ENCODE measurements at regions of chr14 and their contacts with region 1.

Region 1: GRCh38 chr14:100078991-100079725 is 13.9 kb downstream of the EVL start:
- DNase-seq: peak; percentile 68 to 93
- ATAC-seq: peak; percentile 49 to 77 (median 74)
- H3K4me3 ChIP-seq: peak overlapping the region; percentile 23
- H3K4me3 Mint-ChIP-seq: peak overlapping the region; percentile 83
- H3K27ac ChIP-seq: peak overlapping the region; percentile 64
- H3K27ac Mint-ChIP-seq: peak overlapping the region; percentile 93
- H3K4me1 ChIP-seq: peaks cover 94% of the 10 kb centered on the region
- H3K4me1 Mint-ChIP-seq: peaks cover 98% of the 10 kb centered on the region in 2 donors
- H3K27me3 ChIP-seq: no peaks in the 10 kb centered on the region
- H3K27me3 Mint-ChIP-seq: no peaks in the 10 kb centered on the region
- CTCF ChIP-seq: no peak

Region 2: GRCh38 chr14:100067971-100068959 is 10.9 kb before region 1 on chr14:
- intact Hi-C with region 1: loop called (anchors 1 kb)
- DNase-seq: peak; percentile 85 to 96
- ATAC-seq: peak; percentile 53 to 76 (median 65)
- H3K4me3 ChIP-seq: peak overlapping the region; percentile 78
- H3K4me3 Mint-ChIP-seq: peak overlapping the region; percentile 90
- H3K27ac ChIP-seq: peak overlapping the region; percentile 89
- H3K27ac Mint-ChIP-seq: peak overlapping the region; percentile 93
- H3K4me1 ChIP-seq: peaks cover 76% of the 10 kb centered on the region
- H3K4me1 Mint-ChIP-seq: peaks cover 92 to 95% of the 10 kb centered on the region in 2 donors
- H3K27me3 ChIP-seq: no peaks in the 10 kb centered on the region
- H3K27me3 Mint-ChIP-seq: no peaks in the 10 kb centered on the region
- CTCF ChIP-seq: no peak

Region 3: DNA sequence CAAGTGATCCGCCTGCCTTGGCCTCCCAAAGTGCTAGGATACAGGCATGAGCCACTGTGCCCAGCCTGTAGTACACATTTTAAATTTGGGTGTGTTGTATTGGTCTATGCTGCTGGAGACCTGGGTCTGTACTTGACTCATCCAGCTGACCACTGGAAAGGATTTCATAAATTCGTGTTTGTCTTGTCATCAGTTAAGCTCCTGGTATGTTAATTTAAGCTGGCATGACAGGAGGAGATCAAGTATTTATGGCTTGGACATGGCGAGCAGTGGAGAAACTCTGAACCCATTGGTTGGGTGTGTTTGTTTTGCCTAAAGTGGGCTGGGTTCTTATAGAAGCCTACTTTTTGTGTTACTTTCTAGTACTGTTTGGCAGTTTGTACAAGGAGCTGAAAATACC is 184.0 kb after region 1 on chr14:
- intact Hi-C with region 1: no loop called
- DNase-seq: no peak
- ATAC-seq: no peak
- H3K4me3 ChIP-seq: no peak overlapping the region
- H3K4me3 Mint-ChIP-seq: no peak overlapping the region
- H3K27ac ChIP-seq: no peak overlapping the region
- H3K27ac Mint-ChIP-seq: peak overlapping the region in 1 of 2 donors; percentile 19
- H3K4me1 ChIP-seq: peaks cover 22% of the 10 kb centered on the region
- H3K4me1 Mint-ChIP-seq: peaks cover 76 to 84% of the 10 kb centered on the region in 2 donors
- H3K27me3 ChIP-seq: no peaks in the 10 kb centered on the region
- H3K27me3 Mint-ChIP-seq: no peaks in the 10 kb centered on the region
- CTCF ChIP-seq: no peak

Region 4: DNA sequence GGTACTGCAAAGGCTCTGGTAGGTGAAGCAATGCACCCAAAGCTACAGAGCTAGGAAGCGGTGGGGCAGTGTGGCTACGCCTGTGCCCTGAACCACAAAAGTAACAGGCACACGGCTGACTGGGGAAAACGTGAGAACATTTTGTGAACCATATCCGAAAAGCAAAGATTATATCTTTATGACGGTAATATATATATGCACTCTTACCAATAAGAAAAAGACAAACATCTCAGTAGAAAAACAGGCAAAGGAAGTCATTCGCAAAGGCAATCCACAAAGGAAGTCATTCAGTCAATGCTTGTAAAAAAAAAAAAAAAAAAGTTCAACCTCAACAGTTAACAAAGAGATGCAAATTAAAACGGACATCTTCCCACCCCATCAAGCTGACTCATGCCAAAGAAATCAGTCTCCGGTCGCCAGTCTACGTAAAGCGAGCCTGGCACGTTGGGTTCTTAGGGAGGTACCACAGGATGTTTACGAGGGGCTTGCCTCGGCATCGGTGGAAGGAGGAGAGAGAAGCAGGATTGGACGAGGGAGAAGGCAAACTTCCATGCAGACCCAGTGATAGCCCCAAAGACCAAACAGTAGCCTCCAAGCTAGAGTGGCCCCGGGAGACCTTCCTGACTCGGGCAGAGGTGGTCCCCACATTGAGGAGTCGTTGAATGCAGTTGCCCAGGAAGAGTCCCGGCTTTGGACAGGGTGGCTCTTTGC is 1642.9 kb after region 1 on chr14:
- intact Hi-C with region 1: loop called (anchors 10 kb)
- DNase-seq: peak; percentile 72 to 95
- ATAC-seq: peak; percentile 55 to 81 (median 70)
- H3K4me3 ChIP-seq: peak overlapping the region; percentile 10
- H3K4me3 Mint-ChIP-seq: peak overlapping the region; percentile 90
- H3K27ac ChIP-seq: peak overlapping the region; percentile 95
- H3K27ac Mint-ChIP-seq: peak overlapping the region; percentile 96 to 100
- H3K4me1 ChIP-seq: peaks cover 76% of the 10 kb centered on the region
- H3K4me1 Mint-ChIP-seq: peaks cover 70 to 72% of the 10 kb centered on the region in 2 donors
- H3K27me3 ChIP-seq: no peaks in the 10 kb centered on the region
- H3K27me3 Mint-ChIP-seq: no peaks in the 10 kb centered on the region
- CTCF ChIP-seq: no peak